Sigmoid colon (tissue), 7 donors: ENCODE measurements at regions of chr9 and their contacts with region 1.

Region 1: DNA sequence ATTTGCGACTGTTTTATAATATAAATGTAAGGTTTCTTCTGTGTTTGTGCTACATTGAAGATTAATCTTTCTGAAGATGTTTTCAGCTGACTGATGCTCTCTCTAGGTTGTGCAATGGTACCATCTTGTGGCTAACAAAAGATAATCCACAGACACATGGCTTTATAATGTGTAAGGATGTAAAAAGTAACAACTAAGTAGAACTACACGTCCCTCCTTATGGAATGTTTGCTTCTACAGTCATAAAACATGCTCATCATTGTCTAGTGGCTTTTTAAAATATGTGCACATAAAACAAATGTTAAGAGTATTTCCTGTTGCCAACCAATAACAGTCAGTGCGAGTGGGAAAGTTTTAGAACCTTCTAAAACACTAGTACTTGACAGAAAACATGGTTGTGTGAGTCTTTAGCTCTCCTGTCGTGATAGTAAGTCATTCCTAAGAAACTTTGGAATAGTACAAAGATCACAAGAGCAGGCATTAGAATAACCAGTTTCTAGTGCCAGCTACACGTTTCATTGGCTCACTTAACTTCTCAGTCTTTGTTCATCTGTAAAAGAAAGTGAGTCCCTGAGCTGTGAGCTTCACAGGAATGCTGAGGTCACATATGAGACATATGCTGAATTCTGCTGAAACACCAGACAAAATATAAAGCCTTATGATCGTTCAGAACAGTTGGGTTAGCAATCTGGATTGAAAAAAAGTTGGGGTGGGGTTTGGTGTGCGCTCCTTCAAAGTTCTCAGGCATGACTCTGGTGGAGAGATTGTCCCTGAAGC is 75.7 kb upstream of the GLIS3 start:
- DNase-seq: no peak
- H3K4me3 ChIP-seq: no peak overlapping the region
- H3K27ac ChIP-seq: peak overlapping the region in 1 of 4 donors; percentile 6
- H3K4me1 ChIP-seq: peaks cover 0 to 6% (median 0%) of the 10 kb centered on the region in 4 donors
- H3K27me3 ChIP-seq: no peaks in the 10 kb centered on the region
- CTCF ChIP-seq: peak in 2 of 4 experiments; percentile 36 to 52
- EP300 ChIP-seq: no peak
- POLR2A ChIP-seq: no peak

Region 2: GRCh38 chr9:2857564-2858198 is 1517.9 kb before region 1 on chr9:
- intact Hi-C with region 1: loop called (anchors 2 kb)
- DNase-seq: peak; percentile 69
- H3K4me3 ChIP-seq: no peak overlapping the region
- H3K27ac ChIP-seq: no peak overlapping the region
- H3K4me1 ChIP-seq: peaks cover 0 to 3% (median 0%) of the 10 kb centered on the region in 4 donors
- H3K27me3 ChIP-seq: peaks cover 0 to 3% (median 0%) of the 10 kb centered on the region in 3 donors
- CTCF ChIP-seq: peak; percentile 43 to 83 (median 60)
- EP300 ChIP-seq: no peak
- POLR2A ChIP-seq: no peak

Region 3: GRCh38 chr9:4315582-4316215 is 59.9 kb before region 1 on chr9:
- intact Hi-C with region 1: loop called (anchors 2 kb)
- DNase-seq: peak; percentile 83
- H3K4me3 ChIP-seq: no peak overlapping the region
- H3K27ac ChIP-seq: no peak overlapping the region
- H3K4me1 ChIP-seq: no peaks in the 10 kb centered on the region
- H3K27me3 ChIP-seq: no peaks in the 10 kb centered on the region
- CTCF ChIP-seq: peak; percentile 48 to 80 (median 68)
- EP300 ChIP-seq: no peak
- POLR2A ChIP-seq: no peak